ENCODE measurements at regions of chr16 and their contacts with region 1.

Region 1: GRCh38 chr16:48365581-48366164 is 19.5 kb downstream of the SIAH1 start:
- DNase-seq: peak; percentile 78
- ATAC-seq: peak; percentile 97
- H3K4me3 ChIP-seq: peak overlapping the region; percentile 81
- H3K27ac ChIP-seq: peak overlapping the region; percentile 77
- H3K4me1 ChIP-seq: peaks cover 27% of the 10 kb centered on the region
- H3K27me3 ChIP-seq: no peaks in the 10 kb centered on the region
- CTCF ChIP-seq: no peak; the same call in 1 of the 2 replicates

Region 2: GRCh38 chr16:48330841-48331192 is 34.9 kb before region 1 on chr16:
- CTCF ChIA-PET with region 1: no interaction called
- POLR2A ChIA-PET with region 1: no interaction called
- intact Hi-C with region 1: no loop called
- DNase-seq: no peak
- ATAC-seq: no peak
- H3K4me3 ChIP-seq: no peak overlapping the region
- H3K27ac ChIP-seq: no peak overlapping the region
- H3K4me1 ChIP-seq: no peaks in the 10 kb centered on the region
- H3K27me3 ChIP-seq: no peaks in the 10 kb centered on the region
- CTCF ChIP-seq: no peak

Region 3: GRCh38 chr16:48385272-48386150 is 19.8 kb after region 1 on chr16 and contains the start of gene SIAH1:
- CTCF ChIA-PET with region 1: no interaction called
- POLR2A ChIA-PET with region 1: interaction called, 3 read pairs
- intact Hi-C with region 1: loop called (anchors 2 kb)
- DNase-seq: peak; percentile 73
- ATAC-seq: peak; percentile 64
- H3K4me3 ChIP-seq: peak within 1 kb of the TSS; percentile 88
- H3K27ac ChIP-seq: peak within 1 kb of the TSS; percentile 37
- H3K4me1 ChIP-seq: peaks cover 8% of the 10 kb centered on the region; the same call in 1 of the 2 replicates
- H3K27me3 ChIP-seq: no peaks in the 10 kb centered on the region
- CTCF ChIP-seq: no peak
- total RNA-seq, gene SIAH1: 10.9 and 16.2 TPM in 2 replicates

Region 4: GRCh38 chr16:48444574-48444973 is 78.9 kb after region 1 on chr16:
- CTCF ChIA-PET with region 1: no interaction called
- POLR2A ChIA-PET with region 1: no interaction called
- intact Hi-C with region 1: loop called (anchors 5 kb)
- DNase-seq: peak; percentile 85
- ATAC-seq: peak; percentile 68
- H3K4me3 ChIP-seq: peak overlapping the region; percentile 48; the same call in 1 of the 2 replicates
- H3K27ac ChIP-seq: peak overlapping the region; percentile 93
- H3K4me1 ChIP-seq: peaks cover 25% of the 10 kb centered on the region
- H3K27me3 ChIP-seq: no peaks in the 10 kb centered on the region
- CTCF ChIP-seq: no peak

Region 5: DNA sequence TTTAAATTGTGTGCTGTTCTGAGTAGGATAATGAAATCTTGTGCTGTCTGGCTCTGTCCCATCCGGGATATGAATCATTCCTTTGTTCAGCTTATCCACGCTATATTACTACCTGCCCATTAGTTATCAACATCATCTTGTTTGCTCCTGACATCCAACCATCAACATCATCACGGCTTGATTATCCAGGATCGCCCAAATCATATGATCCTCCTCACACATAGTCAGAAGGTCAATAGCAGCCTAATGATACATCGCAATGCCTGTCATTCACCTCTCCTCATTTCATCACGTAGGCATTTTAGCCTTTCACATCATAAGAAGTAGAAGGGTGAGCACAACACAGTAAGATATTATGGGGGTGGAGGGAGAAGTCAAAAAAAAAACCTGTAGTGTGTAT is 96.5 kb after region 1 on chr16:
- CTCF ChIA-PET with region 1: no interaction called
- POLR2A ChIA-PET with region 1: no interaction called
- intact Hi-C with region 1: loop called (anchors 1 kb)
- DNase-seq: peak; percentile 89
- ATAC-seq: peak; percentile 84
- H3K4me3 ChIP-seq: no peak overlapping the region
- H3K27ac ChIP-seq: peak overlapping the region; percentile 67
- H3K4me1 ChIP-seq: peaks cover 19% of the 10 kb centered on the region
- H3K27me3 ChIP-seq: no peaks in the 10 kb centered on the region
- CTCF ChIP-seq: no peak

Region 6: GRCh38 chr16:48526058-48526957 is 160.6 kb after region 1 on chr16:
- CTCF ChIA-PET with region 1: interaction called, 5 read pairs
- POLR2A ChIA-PET with region 1: no interaction called
- intact Hi-C with region 1: loop called (anchors 5 kb)
- DNase-seq: peak; percentile 81
- ATAC-seq: peak; percentile 95
- H3K4me3 ChIP-seq: no peak overlapping the region
- H3K27ac ChIP-seq: no peak overlapping the region
- H3K4me1 ChIP-seq: peaks cover 20% of the 10 kb centered on the region
- H3K27me3 ChIP-seq: no peaks in the 10 kb centered on the region
- CTCF ChIP-seq: peak; percentile 72

Region 7: DNA sequence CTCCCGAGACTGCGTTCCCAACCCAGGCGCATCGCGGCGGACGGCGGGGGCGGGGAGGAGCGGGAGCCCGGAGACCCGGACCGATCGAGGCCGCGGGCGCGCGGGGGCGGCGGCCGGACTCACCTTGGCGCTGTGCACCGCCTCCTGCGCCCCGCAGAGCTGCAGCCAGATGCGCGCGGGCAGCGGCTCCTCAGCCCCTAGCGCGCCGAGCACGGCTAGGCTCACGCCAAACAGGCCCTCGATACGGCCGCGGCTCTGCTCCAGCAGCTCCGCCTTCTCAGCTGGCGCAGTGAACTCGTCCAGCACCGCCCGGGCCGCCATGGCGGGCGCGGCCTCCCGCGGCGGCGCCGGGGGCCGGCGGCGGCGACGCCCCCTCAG is 244.0 kb after region 1 on chr16:
- CTCF ChIA-PET with region 1: no interaction called
- POLR2A ChIA-PET with region 1: no interaction called
- intact Hi-C with region 1: loop called (anchors 5 kb)
- DNase-seq: no peak
- ATAC-seq: peak; percentile 37
- H3K4me3 ChIP-seq: peak overlapping the region; percentile 80
- H3K27ac ChIP-seq: peak overlapping the region; percentile 75
- H3K4me1 ChIP-seq: peaks cover 28% of the 10 kb centered on the region
- H3K27me3 ChIP-seq: no peaks in the 10 kb centered on the region
- CTCF ChIP-seq: no peak